Activated CD4-positive, alpha-beta T cell treated with anti-CD3 and anti-CD28 coated beads for 36 hours (primary cell): ENCODE measurements at regions of chr2 and their contacts with region 1.

Region 1: DNA sequence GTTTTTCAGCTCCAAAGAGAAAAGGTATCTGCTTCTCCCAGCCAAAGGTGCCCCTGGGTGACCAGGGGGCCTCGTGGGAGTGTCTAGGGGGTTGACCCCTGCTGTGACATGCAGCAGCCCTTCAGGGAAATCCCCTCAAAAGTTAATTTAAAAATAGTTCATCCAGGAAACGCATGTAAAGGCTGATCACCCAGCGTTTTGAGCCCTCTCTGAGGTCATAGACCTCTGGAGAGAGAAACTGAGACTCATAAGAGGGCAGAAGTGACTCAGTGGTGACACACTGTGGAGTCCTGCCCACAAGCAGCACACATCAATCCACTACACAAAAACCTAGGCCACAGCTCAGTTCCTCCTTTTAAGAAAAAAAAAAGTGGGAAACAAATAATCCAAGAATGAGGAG is 11.9 kb downstream of the GAL3ST2 start:
- DNase-seq: peak; percentile 75
- ATAC-seq: peak; percentile 93
- H3K4me3 Mint-ChIP-seq: no peak overlapping the region
- H3K27ac Mint-ChIP-seq: peak overlapping the region; percentile 79
- H3K4me1 Mint-ChIP-seq: peaks cover 24% of the 10 kb centered on the region
- H3K27me3 Mint-ChIP-seq: peaks cover 3% of the 10 kb centered on the region

Region 2: DNA sequence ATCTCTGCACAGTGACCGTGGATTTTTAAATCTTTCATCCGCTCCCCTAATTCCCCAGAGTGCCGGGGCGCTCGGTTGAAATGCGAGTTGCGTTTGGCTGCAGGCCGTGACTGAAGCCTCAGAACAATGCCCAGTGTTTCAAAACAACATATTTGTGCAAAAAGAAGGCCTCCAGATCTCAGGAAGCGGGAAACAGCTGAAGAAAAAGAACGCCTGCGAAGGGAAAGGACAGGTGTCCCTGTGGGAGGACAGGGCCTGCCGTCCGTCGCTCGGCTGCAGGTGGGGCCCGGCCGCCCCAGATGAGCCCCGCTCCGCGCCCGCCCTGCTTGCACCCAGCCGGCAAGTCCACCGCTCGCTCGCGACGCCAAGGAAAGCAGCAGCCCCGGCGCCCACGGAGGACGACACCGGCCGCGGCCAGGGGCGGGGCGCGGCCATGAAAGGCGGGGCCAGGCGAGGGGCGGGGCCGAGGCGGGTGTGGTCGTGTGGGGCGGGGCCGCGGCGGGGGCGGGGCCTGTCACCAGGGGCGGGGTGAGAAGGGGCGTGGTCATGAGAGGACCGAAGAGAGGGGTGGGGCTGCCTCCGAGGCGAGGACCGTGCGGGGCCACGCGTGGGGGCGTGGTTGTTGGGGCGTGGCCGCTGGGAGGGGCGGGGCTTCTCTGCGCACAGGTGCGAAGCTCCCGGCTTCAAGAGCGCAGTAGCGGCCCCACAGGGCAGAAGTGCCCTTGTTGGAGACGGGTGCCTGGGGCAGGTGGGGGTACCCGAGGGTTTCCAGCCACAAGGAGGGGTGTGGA is 247.6 kb before region 1 on chr2:
- CTCF ChIA-PET with region 1: no interaction called
- POLR2A ChIA-PET with region 1: no interaction called
- intact Hi-C with region 1: no loop called
- DNase-seq: peak; percentile 90
- ATAC-seq: peak; percentile 92
- H3K4me3 Mint-ChIP-seq: peak overlapping the region; percentile 31
- H3K27ac Mint-ChIP-seq: no peak overlapping the region
- H3K4me1 Mint-ChIP-seq: peaks cover 4% of the 10 kb centered on the region
- H3K27me3 Mint-ChIP-seq: peaks cover 14% of the 10 kb centered on the region

Region 3: DNA sequence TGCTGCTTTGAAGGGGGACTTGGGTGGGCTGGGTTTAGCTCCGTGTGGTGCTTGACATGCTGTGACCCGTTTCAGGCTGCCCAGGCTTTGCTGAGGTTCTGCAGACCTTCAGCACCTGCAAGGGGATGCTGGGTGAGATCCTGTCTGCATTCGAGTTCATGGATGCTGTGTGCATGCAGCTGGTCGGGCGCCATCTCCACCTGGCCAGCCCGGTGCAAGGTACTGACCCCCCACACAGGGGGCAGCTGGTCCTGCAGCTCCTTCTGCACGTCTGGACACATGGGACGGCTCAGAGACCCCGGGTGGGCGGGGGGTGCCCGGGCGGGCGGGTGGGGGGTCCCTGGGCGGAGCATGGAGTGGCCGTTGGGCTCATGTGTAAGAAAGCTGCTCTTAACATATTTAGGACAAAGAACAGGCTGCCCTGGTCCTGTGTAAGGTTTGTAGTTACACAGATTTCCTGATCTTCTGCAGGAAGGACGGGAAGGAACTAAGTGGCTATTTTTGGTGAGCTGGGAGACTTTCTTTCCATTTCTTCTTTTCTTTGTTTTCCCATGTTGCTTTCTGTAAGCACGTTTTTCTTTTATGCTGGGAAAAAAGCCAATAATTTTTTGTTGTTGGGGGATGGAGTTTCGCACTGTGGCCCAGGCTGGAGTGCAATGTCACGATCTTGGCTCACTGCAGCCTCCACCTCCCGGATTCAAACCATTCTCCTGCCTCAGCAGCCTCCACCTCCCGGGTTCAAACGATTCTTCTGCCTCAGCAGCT is 38.3 kb before region 1 on chr2:
- CTCF ChIA-PET with region 1: no interaction called
- POLR2A ChIA-PET with region 1: no interaction called
- intact Hi-C with region 1: no loop called
- DNase-seq: no peak
- ATAC-seq: no peak
- H3K4me3 Mint-ChIP-seq: no peak overlapping the region
- H3K27ac Mint-ChIP-seq: no peak overlapping the region
- H3K4me1 Mint-ChIP-seq: no peaks in the 10 kb centered on the region
- H3K27me3 Mint-ChIP-seq: no peaks in the 10 kb centered on the region

Region 4: GRCh38 chr2:241865957-241866789 is 77.6 kb after region 1 on chr2:
- CTCF ChIA-PET with region 1: no interaction called
- POLR2A ChIA-PET with region 1: interaction called, 3 read pairs
- intact Hi-C with region 1: loop called in 1 of 2 experiments (anchors 2 kb)
- DNase-seq: peak; percentile 70
- ATAC-seq: no peak
- H3K4me3 Mint-ChIP-seq: no peak overlapping the region
- H3K27ac Mint-ChIP-seq: no peak overlapping the region
- H3K4me1 Mint-ChIP-seq: peaks cover 80% of the 10 kb centered on the region
- H3K27me3 Mint-ChIP-seq: peaks cover 24% of the 10 kb centered on the region